ENCODE measurements at regions of chr7 and their contacts with region 1.

Region 1: GRCh38 chr7:77651573-77652162 is 44.6 kb upstream of the RSBN1L start:
- DNase-seq: no peak
- H3K4me3 Mint-ChIP-seq: no peak overlapping the region
- H3K27ac Mint-ChIP-seq: no peak overlapping the region
- H3K4me1 Mint-ChIP-seq: no peaks in the 10 kb centered on the region
- H3K27me3 Mint-ChIP-seq: no peaks in the 10 kb centered on the region

Region 2: GRCh38 chr7:77516085-77516484 is 135.6 kb before region 1 on chr7:
- intact Hi-C with region 1: no loop called
- DNase-seq: no peak
- H3K4me3 Mint-ChIP-seq: no peak overlapping the region
- H3K27ac Mint-ChIP-seq: no peak overlapping the region
- H3K4me1 Mint-ChIP-seq: no peaks in the 10 kb centered on the region
- H3K27me3 Mint-ChIP-seq: peaks cover 11% of the 10 kb centered on the region

Region 3: DNA sequence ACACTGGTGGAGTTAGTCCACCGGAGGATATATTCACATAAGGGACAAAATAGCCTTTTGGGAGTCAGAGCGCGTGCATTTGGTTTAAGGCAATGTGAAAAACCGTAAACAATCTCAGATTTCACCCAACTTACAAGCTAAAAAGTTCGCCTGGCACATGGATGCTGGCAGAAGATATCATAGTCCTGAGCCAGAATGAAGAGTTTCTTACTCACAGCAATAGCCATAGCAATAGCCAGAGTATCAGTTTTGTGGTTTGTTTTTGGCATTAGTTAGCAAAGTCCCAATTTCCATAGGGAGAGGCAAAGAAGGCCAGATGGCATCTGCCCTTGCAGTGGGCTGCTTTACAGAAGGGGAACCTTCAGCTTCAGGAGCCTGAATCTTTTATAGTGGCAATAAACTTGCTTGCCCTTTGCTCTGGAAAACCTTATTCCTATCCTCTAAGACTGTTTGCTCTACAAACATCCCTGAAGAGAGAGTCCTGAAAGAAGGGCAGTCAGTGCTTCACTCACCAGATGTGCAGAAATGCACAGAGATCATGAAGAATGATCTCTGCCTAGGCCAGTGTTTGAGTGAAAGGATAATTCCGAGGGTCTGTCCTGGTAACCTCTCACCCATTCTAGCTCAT is 15.9 kb after region 1 on chr7:
- intact Hi-C with region 1: no loop called
- DNase-seq: no peak
- H3K4me3 Mint-ChIP-seq: no peak overlapping the region
- H3K27ac Mint-ChIP-seq: no peak overlapping the region
- H3K4me1 Mint-ChIP-seq: no peaks in the 10 kb centered on the region
- H3K27me3 Mint-ChIP-seq: no peaks in the 10 kb centered on the region

Region 4: GRCh38 chr7:77759294-77759889 is 107.7 kb after region 1 on chr7:
- intact Hi-C with region 1: loop called (anchors 1 kb)
- DNase-seq: peak; percentile 46
- H3K4me3 Mint-ChIP-seq: no peak overlapping the region
- H3K27ac Mint-ChIP-seq: no peak overlapping the region
- H3K4me1 Mint-ChIP-seq: peaks cover 26% of the 10 kb centered on the region
- H3K27me3 Mint-ChIP-seq: no peaks in the 10 kb centered on the region